ENCODE measurements at regions of chr22 and their contacts with region 1.

Region 1: GRCh38 chr22:37862570-37863325 is 13.5 kb downstream of the EIF3L start:
- DNase-seq: no peak
- ATAC-seq: no peak
- H3K4me3 Mint-ChIP-seq: no peak overlapping the region
- H3K27ac Mint-ChIP-seq: no peak overlapping the region
- H3K4me1 Mint-ChIP-seq: no peaks in the 10 kb centered on the region
- H3K27me3 Mint-ChIP-seq: no peaks in the 10 kb centered on the region
- CTCF ChIP-seq: no peak

Region 2: GRCh38 chr22:37824674-37825641 is 37.8 kb before region 1 on chr22:
- CTCF ChIA-PET with region 1: interaction called, 109 read pairs
- POLR2A ChIA-PET with region 1: interaction called, 3 read pairs
- DNase-seq: peak; percentile 63
- ATAC-seq: peak; percentile 68
- H3K4me3 Mint-ChIP-seq: peak overlapping the region; percentile 57
- H3K27ac Mint-ChIP-seq: no peak overlapping the region
- H3K4me1 Mint-ChIP-seq: peaks cover 28% of the 10 kb centered on the region
- H3K27me3 Mint-ChIP-seq: peaks cover 51% of the 10 kb centered on the region
- CTCF ChIP-seq: no peak

Region 3: GRCh38 chr22:37887610-37888378 is 25.0 kb after region 1 on chr22:
- CTCF ChIA-PET with region 1: interaction called, 17 read pairs
- POLR2A ChIA-PET with region 1: no interaction called
- DNase-seq: no peak
- ATAC-seq: peak; percentile 84
- H3K4me3 Mint-ChIP-seq: no peak overlapping the region
- H3K27ac Mint-ChIP-seq: peak overlapping the region; percentile 28; the same call in 1 of the 2 replicates
- H3K4me1 Mint-ChIP-seq: peaks cover under 1% of the 10 kb centered on the region
- H3K27me3 Mint-ChIP-seq: no peaks in the 10 kb centered on the region
- CTCF ChIP-seq: no peak

Region 4: DNA sequence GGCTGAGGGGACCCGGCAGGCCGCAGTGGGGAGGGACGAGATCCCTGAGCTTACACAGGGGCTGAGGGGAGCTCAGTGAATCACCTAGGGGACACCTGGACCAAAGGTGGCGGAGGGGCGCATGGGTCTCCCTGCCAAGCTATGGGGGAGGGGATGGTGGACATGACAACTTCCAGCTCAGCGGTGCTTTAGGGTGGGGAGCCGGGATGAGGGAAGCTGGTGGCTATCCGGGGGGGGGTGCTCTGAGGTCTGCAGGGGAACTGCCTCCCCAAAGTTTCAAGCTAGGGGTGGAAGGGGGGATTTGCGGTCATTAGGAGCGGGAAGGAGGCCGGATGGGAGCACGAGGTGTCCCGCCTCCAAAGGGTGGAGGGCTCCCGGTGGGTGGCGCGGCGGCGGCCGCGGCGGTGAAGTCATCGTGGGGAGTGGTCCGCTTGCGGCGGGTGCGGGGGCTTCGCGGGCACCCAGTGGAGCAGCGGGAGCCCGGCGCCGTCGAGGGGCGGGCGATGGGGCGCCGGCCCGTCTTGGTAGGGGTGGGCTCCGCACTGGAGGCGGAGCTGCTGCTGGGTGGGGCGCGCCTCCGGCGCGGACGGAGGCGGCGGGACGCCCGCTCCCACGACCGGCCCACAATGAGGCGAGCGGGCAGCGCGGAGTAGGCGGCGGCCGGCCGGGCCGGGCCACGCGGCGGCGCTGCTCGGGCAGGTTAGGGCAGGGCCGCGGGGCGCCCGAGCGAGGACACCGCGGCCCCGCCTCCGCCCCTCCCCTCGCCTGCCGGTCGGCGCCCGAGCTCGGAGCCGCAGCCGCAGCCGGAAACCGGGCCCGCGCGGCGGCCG is 43.0 kb after region 1 on chr22 and contains the start of gene MICALL1:
- CTCF ChIA-PET with region 1: interaction called, 15 read pairs
- POLR2A ChIA-PET with region 1: no interaction called
- DNase-seq: peak; percentile 68
- ATAC-seq: peak; percentile 78
- H3K4me3 Mint-ChIP-seq: peak within 1 kb of the TSS; percentile 76
- H3K27ac Mint-ChIP-seq: no peak within 1 kb of the TSS; the same call in 1 of the 2 replicates
- H3K4me1 Mint-ChIP-seq: peaks cover 34% of the 10 kb centered on the region
- H3K27me3 Mint-ChIP-seq: no peaks in the 10 kb centered on the region
- CTCF ChIP-seq: no peak
- total RNA-seq, gene MICALL1: 34.1 to 47.2 TPM (median 38.6 TPM) in 3 replicates

Region 5: DNA sequence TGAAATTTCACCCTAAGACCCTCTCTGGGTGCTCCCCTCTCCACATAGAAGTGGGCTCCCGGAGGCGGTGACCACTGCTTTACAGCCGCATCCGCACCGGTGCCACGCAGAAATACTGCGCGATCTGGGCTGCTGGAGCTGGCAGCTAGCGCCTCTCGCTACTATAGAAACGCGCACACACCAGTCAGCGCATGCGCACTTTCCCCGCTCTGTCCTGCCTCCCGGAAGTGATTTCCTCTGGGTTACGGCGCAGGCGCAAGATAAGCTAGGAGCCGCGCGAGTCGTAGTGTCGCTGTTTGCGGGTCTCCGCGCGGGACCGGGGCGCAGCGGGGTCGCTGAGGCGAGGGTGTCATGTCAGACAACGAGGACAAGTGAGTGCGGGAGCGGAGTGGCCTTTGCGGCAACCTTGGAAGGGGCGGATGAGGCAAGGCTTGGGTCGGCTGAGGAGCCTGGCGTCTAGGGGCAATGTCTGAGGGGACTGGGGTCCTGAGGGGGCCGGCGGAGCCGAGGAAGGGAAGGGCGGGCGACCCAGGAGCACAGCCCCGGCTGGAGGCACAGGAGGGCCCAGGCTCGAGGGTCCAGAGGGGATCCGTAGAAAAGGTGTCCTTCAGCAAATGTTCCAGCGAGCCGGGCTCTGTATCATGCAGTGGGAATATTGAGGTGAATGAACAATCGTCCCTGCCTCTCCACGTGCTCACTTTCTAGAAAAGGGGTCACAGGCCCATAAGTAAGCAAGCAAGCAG is 90.9 kb after region 1 on chr22 and contains the starts of genes C22orf23 and POLR2F:
- CTCF ChIA-PET with region 1: interaction called, 10 read pairs
- POLR2A ChIA-PET with region 1: no interaction called
- DNase-seq: peak; percentile 96
- ATAC-seq: peak; percentile 86
- H3K4me3 Mint-ChIP-seq: peak within 1 kb of the TSS; percentile 95
- H3K27ac Mint-ChIP-seq: peak within 1 kb of the TSS; percentile 95
- H3K4me1 Mint-ChIP-seq: peaks cover 24% of the 10 kb centered on the region
- H3K27me3 Mint-ChIP-seq: peaks cover 16% of the 10 kb centered on the region
- CTCF ChIP-seq: no peak
- total RNA-seq, gene C22orf23: 0.16 to 0.96 TPM (median 0.72 TPM) in 3 replicates
- total RNA-seq, gene POLR2F: 128 to 138 TPM (median 132 TPM) in 3 replicates